BJ (cell line): ENCODE measurements at regions of chr1 and their contacts with region 1.

Region 1: DNA sequence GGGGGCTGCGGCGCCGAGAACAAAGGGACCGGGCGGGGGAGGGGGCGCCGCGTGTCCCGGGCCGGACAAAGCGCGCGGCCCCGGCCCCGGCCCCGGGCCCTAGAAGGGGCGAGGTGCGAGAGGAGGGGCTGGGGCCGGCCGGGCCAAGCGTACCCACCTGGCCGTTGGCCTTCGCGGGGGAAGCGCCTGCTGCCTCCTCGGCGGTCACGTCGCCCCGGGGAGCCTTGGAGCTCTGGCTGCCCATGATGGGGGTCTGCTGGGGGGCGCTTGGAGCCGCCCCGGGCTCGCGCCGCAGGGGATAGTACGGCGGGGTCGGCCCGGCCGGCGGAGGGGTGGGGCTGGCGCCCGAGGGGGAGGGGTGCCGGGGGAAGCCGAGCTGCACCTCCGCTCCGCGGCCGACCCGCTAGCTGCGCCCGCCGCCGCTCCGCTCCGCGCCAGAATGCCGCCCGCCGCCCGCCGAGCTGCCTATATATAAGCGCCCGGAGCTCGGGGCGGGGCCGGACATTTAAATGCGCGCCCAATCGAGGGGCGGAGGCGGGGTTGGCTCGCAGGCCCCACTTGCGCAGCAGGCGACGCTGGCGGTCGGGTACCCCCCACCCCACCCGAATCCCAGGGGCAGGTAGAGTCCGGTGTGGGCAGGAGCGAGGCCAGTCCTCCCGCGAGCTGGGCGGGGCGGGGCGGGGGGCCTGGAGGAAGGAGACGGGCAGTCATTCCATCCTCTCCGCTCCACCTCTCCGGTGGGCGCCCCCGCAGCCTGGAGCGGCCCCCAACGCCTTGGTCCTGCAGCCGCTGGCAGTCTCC is at the start of gene MARCKSL1:
- DNase-seq: no peak
- H3K4me3 ChIP-seq: peak within 1 kb of the TSS; percentile 61
- H3K27me3 ChIP-seq: no peaks in the 10 kb centered on the region
- CTCF ChIP-seq: no peak
- polyA plus RNA-seq, gene MARCKSL1: 41.3 and 52.0 TPM in 2 replicates

Region 2: GRCh38 chr1:32351399-32352238 is 15.6 kb after region 1 on chr1:
- CTCF ChIA-PET with region 1: interaction called, 8 read pairs
- POLR2A ChIA-PET with region 1: interaction called, 10 read pairs
- DNase-seq: peak; percentile 39
- H3K4me3 ChIP-seq: peak overlapping the region; percentile 61
- H3K27me3 ChIP-seq: no peaks in the 10 kb centered on the region
- CTCF ChIP-seq: peak; percentile 20; the same call in 1 of the 2 replicates